Mammary epithelial cell (primary cell): ENCODE measurements at regions of chrX and their contacts with region 1.

Region 1: GRCh38 chrX:57929373-57929772 is 19.1 kb upstream of the ZXDA start:
- DNase-seq: peak; percentile 26
- H3K4me3 ChIP-seq: no peak overlapping the region
- H3K27ac ChIP-seq: no peak overlapping the region
- H3K4me1 ChIP-seq: no peaks in the 10 kb centered on the region
- H3K27me3 ChIP-seq: no peaks in the 10 kb centered on the region
- CTCF ChIP-seq: peak; percentile 51 to 63

Region 2: DNA sequence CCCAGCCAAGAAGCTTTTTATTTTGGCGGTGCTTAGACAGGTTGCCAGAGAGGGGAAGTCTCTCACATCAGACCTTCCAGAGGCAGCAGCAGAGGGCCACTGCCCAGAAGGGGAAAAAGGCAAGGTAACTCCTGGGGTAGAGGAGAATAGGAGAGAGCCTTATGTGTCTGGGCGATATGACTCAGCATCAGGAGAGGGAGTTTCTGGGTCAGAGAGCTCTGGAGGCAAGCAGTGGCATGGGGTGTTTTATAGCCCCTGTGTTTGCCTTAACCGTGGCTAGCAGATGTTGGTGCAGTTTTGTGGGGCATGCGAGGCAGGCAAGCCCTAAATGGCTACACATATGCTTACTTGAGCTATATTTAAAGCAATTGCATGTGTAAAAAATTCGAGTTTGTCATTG is 345.9 kb before region 1 on chrX:
- CTCF ChIA-PET with region 1: no interaction called
- dilution Hi-C with region 1: no loop called
- in situ Hi-C with region 1: loop called (anchors 25 kb)
- intact Hi-C with region 1: loop called (anchors 5 kb)
- DNase-seq: peak; percentile 28
- H3K4me3 ChIP-seq: no peak overlapping the region
- H3K27ac ChIP-seq: no peak overlapping the region
- H3K4me1 ChIP-seq: no peaks in the 10 kb centered on the region
- H3K27me3 ChIP-seq: peaks cover 2% of the 10 kb centered on the region
- CTCF ChIP-seq: no peak

Region 3: DNA sequence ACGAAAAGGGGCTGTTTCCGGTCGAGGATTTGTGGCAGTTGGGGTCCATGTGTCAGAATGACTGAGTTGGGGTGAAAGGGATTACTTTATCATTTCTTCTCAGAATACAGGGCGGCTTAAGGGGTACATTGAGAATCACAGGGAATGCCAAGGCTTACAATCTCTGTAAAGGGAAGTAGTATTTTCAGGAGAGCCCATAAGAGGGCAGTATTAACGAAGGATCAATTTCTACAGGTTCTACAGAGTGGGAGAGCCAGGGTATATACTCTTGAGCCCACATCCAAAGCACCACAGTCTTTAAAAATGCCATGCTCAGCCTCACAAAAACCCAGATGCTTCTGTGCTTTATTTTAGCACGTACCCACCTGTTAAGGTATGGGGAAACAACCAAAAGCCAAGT is 48.6 kb after region 1 on chrX:
- CTCF ChIA-PET with region 1: no interaction called
- dilution Hi-C with region 1: no loop called
- in situ Hi-C with region 1: no loop called
- intact Hi-C with region 1: no loop called
- DNase-seq: no peak
- H3K4me3 ChIP-seq: no peak overlapping the region
- H3K27ac ChIP-seq: no peak overlapping the region
- H3K4me1 ChIP-seq: no peaks in the 10 kb centered on the region
- H3K27me3 ChIP-seq: no peaks in the 10 kb centered on the region
- CTCF ChIP-seq: no peak